Esophagus muscularis mucosa (tissue), 4 donors: ENCODE measurements at regions of chr17 and their contacts with region 1.

Region 1: GRCh38 chr17:9256751-9257629 is 235.7 kb downstream of the NTN1 start:
- DNase-seq: no peak
- H3K4me3 ChIP-seq: no peak overlapping the region
- H3K27ac ChIP-seq: peak overlapping the region; percentile 22 to 70 (median 58)
- H3K4me1 ChIP-seq: peaks cover 18 to 63% (median 50%) of the 10 kb centered on the region in 4 donors
- H3K27me3 ChIP-seq: no peaks in the 10 kb centered on the region
- CTCF ChIP-seq: no peak
- EP300 ChIP-seq: no peak
- POLR2A ChIP-seq: no peak

Region 2: GRCh38 chr17:9361188-9361955 is 104.4 kb after region 1 on chr17:
- intact Hi-C with region 1: loop called (anchors 5 kb)
- DNase-seq: no peak
- H3K4me3 ChIP-seq: no peak overlapping the region
- H3K27ac ChIP-seq: no peak overlapping the region
- H3K4me1 ChIP-seq: peaks cover 4 to 13% (median 11%) of the 10 kb centered on the region in 4 donors
- H3K27me3 ChIP-seq: no peaks in the 10 kb centered on the region
- CTCF ChIP-seq: no peak
- EP300 ChIP-seq: no peak
- POLR2A ChIP-seq: no peak